Aorta (tissue), 5 donors: ENCODE measurements at regions of chr6 and their contacts with region 1.

Region 1: DNA sequence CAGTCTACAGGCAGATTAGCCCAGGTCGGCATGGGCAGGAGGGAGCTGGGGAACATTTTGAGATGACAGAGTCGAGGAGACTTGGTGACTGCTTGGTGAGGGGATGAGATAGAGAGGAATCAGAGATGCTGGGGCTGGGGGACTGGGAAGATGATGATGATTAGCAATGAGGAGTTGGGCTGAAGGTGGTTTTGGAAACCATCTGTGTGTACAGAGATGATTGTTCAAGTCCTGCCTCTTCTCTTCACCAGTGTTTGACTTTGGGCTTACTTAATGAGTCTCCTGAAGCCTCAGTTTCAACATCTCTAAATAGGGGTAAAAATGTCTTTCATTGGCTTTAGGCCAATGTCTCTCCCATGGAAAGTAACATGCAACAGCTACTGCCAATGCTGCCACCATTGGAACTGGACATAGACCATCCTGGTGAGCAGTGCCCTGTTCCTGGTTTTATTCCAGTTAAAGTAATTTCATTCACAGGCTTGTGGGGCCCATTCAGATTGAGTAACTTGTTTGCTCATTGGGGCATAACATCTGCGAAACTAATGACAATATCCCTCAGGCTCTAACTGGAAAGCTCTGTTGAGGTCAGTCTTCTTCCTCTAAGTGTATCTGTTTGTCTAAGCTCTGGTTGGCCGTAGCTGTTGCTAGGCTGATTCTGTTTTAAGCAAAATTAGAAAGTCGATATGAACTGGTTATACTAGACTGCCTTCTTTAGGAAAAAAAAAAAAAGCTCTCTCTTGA is 99.1 kb downstream of the ARMC2 start:
- DNase-seq: no peak
- ATAC-seq: peak; percentile 49
- H3K4me3 ChIP-seq: no peak overlapping the region
- H3K27ac ChIP-seq: peak overlapping the region; percentile 94 to 97
- H3K4me1 ChIP-seq: peaks cover 9 to 11% of the 10 kb centered on the region in 2 donors
- H3K27me3 ChIP-seq: no peaks in the 10 kb centered on the region

Region 2: DNA sequence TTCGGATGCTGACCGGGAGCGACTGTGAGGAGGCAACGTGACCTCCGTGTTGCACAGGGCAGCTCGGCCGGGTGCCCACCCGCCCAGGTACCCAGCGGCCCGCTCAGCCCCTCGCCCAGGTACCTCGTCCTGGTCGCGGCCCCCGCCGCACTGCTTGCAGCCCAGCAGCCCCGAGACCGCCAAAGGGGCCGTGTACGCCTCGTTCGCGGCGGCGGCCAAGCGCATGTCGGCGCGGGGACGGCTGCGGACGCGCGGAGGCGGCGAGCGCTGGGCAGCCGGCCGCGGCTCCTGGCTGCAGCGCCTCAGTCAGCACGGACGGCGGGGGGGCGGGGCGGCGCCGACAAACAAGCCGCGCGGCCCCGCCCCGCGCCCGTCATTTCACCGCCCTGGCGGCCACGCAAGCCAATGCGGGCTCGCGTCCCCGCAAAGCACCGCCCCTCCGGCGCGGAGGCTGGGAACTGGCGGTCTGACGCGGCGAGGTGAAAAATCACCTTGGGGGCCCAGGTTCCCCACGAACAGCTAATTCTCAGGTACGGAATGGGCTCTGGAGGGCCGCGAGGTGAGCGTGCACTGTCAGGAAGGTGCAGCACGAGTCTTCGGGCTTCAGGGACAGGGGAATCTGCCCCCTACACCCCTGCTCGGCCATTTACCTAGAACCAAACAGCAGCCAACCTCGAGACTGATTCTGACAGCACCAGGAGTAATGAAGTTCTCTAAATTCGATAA is 62.1 kb after region 1 on chr6:
- intact Hi-C with region 1: loop called in 1 of 2 experiments (anchors 5 kb)
- DNase-seq: peak; percentile 97
- ATAC-seq: peak; percentile 97
- H3K4me3 ChIP-seq: peak overlapping the region; percentile 76 to 81
- H3K27ac ChIP-seq: peak overlapping the region in 1 of 2 donors; percentile 94
- H3K4me1 ChIP-seq: no peaks in the 10 kb centered on the region
- H3K27me3 ChIP-seq: no peaks in the 10 kb centered on the region